Mammary epithelial cell (primary cell): ENCODE measurements at regions of chr10 and their contacts with region 1.

Region 1: DNA sequence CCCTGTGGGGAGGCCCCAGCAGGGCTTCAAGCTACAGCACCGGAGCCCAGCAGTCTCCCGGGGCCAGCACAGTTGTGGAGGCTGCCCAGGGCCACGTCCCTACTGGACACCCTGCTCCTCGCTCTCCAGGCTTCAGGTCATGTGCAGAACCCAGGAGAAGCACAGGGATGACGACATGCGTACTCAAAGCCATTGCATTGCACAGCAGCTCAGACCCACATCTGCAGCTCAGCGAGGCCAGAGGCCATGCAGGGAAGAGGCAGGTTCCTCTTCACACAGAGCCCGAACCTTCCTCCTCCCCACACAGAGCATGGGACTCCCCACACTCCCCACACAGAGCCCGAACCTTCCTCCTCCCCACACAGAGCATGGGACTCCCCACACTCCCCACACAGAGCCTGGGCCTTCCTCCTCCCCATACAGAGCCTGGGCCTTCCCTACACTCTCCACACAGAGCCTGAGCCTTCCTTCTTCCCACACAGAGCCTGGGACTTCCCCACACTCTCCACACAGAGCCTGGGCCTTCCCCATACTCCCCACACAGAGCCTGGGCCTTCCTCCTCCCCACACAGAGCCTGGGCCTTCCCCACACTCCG is 12.3 kb downstream of the CFAP46 start:
- DNase-seq: no peak
- H3K4me3 ChIP-seq: no peak overlapping the region
- H3K27ac ChIP-seq: no peak overlapping the region
- H3K4me1 ChIP-seq: no peaks in the 10 kb centered on the region
- H3K27me3 ChIP-seq: no peaks in the 10 kb centered on the region
- CTCF ChIP-seq: no peak

Region 2: DNA sequence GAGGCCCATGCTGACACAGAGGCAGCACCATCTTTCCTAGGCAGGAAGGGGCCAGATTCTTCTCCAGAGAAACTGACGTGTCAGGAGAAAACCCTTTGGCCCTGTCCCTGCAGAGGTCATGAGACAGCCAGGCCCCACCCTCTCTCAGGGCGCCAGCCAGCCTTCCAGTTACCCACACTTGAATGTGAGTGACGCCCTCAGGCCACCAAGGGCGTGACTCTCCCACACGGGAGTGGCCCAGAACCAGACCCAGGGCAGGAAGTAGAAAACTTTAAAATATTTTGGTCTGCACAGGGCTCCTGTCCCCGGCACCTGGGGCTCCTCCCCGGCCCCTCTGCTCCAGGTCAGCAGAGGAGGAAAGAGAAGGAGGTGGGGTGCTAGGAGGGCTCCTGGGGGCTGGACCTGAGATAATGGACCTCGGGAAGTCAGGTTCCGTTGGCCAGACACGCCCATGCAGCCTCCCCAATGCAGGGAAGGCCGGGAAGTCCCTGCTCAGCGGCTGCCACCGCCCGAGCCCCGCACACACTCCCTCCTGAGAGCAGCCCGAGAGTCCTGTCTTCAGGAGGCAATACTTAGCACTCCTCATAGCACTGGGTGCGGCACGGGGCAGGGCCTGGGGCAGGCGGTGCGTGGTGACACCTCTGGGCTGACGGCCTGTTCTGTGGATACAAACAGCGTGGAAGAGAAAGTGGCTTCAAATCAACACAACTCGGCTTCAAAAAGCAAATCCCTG is 79.3 kb after region 1 on chr10:
- CTCF ChIA-PET with region 1: no interaction called
- dilution Hi-C with region 1: loop called (anchors 5 kb)
- in situ Hi-C with region 1: no loop called
- intact Hi-C with region 1: no loop called
- DNase-seq: no peak
- H3K4me3 ChIP-seq: no peak overlapping the region
- H3K27ac ChIP-seq: no peak overlapping the region
- H3K4me1 ChIP-seq: no peaks in the 10 kb centered on the region
- H3K27me3 ChIP-seq: no peaks in the 10 kb centered on the region
- CTCF ChIP-seq: no peak

Region 3: GRCh38 chr10:133186416-133187090 is 256.5 kb after region 1 on chr10:
- CTCF ChIA-PET with region 1: no interaction called
- dilution Hi-C with region 1: no loop called
- in situ Hi-C with region 1: no loop called
- intact Hi-C with region 1: no loop called
- DNase-seq: no peak
- H3K4me3 ChIP-seq: no peak overlapping the region
- H3K27ac ChIP-seq: no peak overlapping the region
- H3K4me1 ChIP-seq: no peaks in the 10 kb centered on the region
- H3K27me3 ChIP-seq: no peaks in the 10 kb centered on the region
- CTCF ChIP-seq: no peak